ENCODE measurements at regions of chr1 and their contacts with region 1.

Region 1: GRCh38 chr1:24642481-24643361 is at the start of gene SRRM1:
- DNase-seq: peak; percentile 99
- H3K4me3 Mint-ChIP-seq: peak within 1 kb of the TSS; percentile 91
- H3K27ac Mint-ChIP-seq: peak within 1 kb of the TSS; percentile 98
- H3K4me1 Mint-ChIP-seq: peaks cover 38% of the 10 kb centered on the region
- H3K27me3 Mint-ChIP-seq: no peaks in the 10 kb centered on the region
- total RNA-seq, gene SRRM1: 258 and 261 TPM in 2 replicates

Region 2: DNA sequence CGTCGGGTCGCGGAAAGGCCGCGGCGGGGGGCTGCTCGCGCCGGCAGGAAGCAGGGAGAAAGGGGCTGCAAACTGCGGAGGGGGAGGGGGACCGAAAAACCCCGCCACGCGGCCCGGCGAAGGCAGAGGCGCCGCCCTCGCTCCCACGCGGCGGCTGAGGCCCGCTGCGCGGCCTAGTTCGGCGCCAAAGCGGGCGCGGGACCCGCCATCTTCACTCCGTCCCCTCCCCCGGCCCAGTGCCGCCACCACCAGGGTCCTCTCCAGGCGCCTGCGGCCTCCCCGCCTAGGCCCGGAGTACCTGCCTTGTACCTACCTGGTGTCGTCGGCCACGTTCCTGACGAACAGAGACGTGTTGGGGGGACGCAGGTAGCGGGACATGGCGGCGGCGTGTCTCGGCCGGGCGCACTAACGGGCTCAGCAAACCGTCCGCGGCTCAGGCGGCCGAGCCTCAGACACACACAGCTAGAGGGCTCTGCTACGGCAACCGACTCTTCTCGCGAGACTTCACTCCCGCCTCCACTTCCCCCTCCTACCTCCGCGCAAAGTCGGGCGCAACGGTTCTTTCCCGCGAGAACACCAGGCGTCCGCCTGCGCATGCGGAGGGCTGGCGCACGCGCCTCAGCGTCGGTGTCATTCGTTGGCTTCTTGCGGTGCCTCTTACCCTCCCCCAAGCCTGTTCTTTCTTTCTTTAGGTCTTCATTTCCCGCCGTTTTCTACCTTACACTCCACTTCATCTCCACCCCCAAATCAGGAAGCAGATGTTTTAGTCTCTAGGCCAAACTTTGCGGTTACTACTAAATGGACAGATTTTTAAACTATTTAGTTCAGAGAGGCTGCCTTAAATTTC is 662.6 kb before region 1 on chr1 and contains the start of gene SRSF10:
- intact Hi-C with region 1: loop called (anchors 5 kb)
- DNase-seq: peak; percentile 99
- H3K4me3 Mint-ChIP-seq: peak within 1 kb of the TSS; percentile 98
- H3K27ac Mint-ChIP-seq: peak within 1 kb of the TSS; percentile 96
- H3K4me1 Mint-ChIP-seq: peaks cover 30% of the 10 kb centered on the region
- H3K27me3 Mint-ChIP-seq: peaks cover 2% of the 10 kb centered on the region
- total RNA-seq, gene SRSF10: 236 and 247 TPM in 2 replicates

Region 3: GRCh38 chr1:24481101-24481500 is 161.6 kb before region 1 on chr1:
- intact Hi-C with region 1: loop called (anchors 5 kb)
- DNase-seq: peak; percentile 88
- H3K4me3 Mint-ChIP-seq: peak overlapping the region; percentile 73
- H3K27ac Mint-ChIP-seq: peak overlapping the region; percentile 85
- H3K4me1 Mint-ChIP-seq: peaks cover 47% of the 10 kb centered on the region
- H3K27me3 Mint-ChIP-seq: no peaks in the 10 kb centered on the region

Region 4: DNA sequence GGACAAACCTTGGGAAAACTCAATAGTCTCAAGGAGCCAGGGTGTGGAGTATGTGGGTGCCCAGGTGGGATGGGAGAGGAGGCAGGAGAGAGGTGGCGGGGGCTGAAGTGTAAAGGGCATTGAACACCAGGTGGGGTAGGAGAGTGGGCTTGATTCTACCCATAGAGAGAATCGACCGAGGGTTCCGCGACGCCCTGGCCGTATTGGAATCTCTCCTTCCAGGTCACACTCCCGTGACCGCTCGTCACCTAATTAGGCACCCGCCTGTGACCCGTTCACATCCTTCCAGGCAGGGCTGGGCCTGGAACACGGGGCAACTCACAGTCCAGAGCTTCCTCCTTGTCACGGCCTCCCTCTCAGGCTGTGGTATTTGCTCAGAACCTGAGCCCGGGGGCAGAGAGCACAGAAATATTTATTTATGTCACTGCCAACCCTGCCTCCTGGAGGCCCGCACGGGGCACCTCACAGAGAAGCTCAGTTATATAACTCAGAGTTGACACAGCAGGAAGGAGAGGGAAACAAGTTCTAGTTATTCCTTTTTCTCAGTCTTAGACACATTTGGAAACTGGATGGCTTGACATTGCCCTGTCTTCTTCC is 74.8 kb before region 1 on chr1:
- intact Hi-C with region 1: no loop called
- DNase-seq: no peak
- H3K4me3 Mint-ChIP-seq: no peak overlapping the region
- H3K27ac Mint-ChIP-seq: no peak overlapping the region
- H3K4me1 Mint-ChIP-seq: peaks cover 7% of the 10 kb centered on the region
- H3K27me3 Mint-ChIP-seq: peaks cover 20% of the 10 kb centered on the region

Region 5: DNA sequence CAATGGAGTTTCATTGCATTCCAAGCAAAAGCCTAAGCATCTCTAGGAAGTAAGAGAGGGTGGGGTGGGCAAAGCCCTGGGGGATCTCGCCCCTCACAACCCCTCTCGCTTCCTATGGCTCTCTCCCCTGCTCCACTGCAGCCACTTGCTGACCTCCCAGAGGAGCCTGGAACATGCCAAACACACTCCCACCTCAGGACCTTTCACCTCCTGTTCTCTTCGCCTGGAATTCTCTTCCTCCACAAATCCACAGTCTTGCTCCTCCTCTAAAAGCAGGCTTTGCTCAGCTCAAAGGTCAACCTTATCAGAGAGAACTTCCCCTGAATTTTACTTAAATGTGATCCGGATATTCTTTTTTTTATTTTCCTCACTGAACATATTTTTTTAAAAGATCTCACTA is 20.5 kb before region 1 on chr1:
- intact Hi-C with region 1: no loop called
- DNase-seq: no peak
- H3K4me3 Mint-ChIP-seq: no peak overlapping the region
- H3K27ac Mint-ChIP-seq: no peak overlapping the region
- H3K4me1 Mint-ChIP-seq: no peaks in the 10 kb centered on the region
- H3K27me3 Mint-ChIP-seq: peaks cover 32% of the 10 kb centered on the region

Region 6: DNA sequence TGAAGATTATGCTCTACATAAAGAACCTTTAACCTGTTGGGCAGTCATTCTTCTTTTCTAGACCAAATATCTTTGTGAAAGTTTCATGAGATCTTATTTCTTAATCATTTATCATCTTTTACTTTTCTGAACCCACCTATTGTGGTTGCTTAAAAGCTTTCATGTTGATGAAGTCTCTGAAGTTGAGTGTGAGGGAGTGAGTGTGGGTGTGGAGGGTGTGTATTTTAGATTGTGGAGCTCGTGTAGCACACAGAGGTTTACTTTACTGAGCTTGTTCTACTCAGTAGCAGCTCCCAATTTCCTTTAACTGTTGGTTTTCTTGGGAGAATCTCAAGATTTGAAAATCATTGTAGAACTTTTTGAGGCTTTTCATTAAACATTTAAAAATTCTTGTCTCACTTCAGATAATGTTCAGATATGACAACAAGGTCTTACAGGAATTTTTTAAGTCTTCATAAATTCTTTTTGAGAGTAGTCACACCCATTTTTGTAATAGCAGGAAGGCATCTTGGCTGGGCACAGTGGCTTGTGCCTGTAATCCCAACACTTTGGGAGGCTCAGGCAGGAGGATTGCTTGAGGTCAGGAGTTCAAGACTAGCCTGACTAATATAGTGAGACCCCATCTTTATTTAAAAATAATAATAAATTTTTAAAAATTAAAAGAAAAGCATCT is 17.4 kb after region 1 on chr1:
- intact Hi-C with region 1: no loop called
- DNase-seq: no peak
- H3K4me3 Mint-ChIP-seq: no peak overlapping the region
- H3K27ac Mint-ChIP-seq: no peak overlapping the region
- H3K4me1 Mint-ChIP-seq: peaks cover 30% of the 10 kb centered on the region
- H3K27me3 Mint-ChIP-seq: no peaks in the 10 kb centered on the region

Region 7: GRCh38 chr1:24744911-24745710 is 102.4 kb after region 1 on chr1 and contains the start of gene CLIC4:
- intact Hi-C with region 1: loop called (anchors 1 kb)
- DNase-seq: peak; percentile 100
- H3K4me3 Mint-ChIP-seq: peak within 1 kb of the TSS; percentile 94
- H3K27ac Mint-ChIP-seq: peak within 1 kb of the TSS; percentile 86
- H3K4me1 Mint-ChIP-seq: peaks cover 53% of the 10 kb centered on the region
- H3K27me3 Mint-ChIP-seq: no peaks in the 10 kb centered on the region
- total RNA-seq, gene CLIC4: 15.7 and 17.4 TPM in 2 replicates

Region 8: GRCh38 chr1:25247024-25247828 is 604.5 kb after region 1 on chr1 and contains the start of gene RSRP1:
- intact Hi-C with region 1: loop called (anchors 1 kb)
- DNase-seq: peak; percentile 100
- H3K4me3 Mint-ChIP-seq: peak within 1 kb of the TSS; percentile 97
- H3K27ac Mint-ChIP-seq: peak within 1 kb of the TSS; percentile 99
- H3K4me1 Mint-ChIP-seq: peaks cover 42% of the 10 kb centered on the region
- H3K27me3 Mint-ChIP-seq: peaks cover 7% of the 10 kb centered on the region
- total RNA-seq, gene RSRP1: 117 and 118 TPM in 2 replicates